GM23248 (cell line): ENCODE measurements at regions of chr6 and their contacts with region 1.

Region 1: DNA sequence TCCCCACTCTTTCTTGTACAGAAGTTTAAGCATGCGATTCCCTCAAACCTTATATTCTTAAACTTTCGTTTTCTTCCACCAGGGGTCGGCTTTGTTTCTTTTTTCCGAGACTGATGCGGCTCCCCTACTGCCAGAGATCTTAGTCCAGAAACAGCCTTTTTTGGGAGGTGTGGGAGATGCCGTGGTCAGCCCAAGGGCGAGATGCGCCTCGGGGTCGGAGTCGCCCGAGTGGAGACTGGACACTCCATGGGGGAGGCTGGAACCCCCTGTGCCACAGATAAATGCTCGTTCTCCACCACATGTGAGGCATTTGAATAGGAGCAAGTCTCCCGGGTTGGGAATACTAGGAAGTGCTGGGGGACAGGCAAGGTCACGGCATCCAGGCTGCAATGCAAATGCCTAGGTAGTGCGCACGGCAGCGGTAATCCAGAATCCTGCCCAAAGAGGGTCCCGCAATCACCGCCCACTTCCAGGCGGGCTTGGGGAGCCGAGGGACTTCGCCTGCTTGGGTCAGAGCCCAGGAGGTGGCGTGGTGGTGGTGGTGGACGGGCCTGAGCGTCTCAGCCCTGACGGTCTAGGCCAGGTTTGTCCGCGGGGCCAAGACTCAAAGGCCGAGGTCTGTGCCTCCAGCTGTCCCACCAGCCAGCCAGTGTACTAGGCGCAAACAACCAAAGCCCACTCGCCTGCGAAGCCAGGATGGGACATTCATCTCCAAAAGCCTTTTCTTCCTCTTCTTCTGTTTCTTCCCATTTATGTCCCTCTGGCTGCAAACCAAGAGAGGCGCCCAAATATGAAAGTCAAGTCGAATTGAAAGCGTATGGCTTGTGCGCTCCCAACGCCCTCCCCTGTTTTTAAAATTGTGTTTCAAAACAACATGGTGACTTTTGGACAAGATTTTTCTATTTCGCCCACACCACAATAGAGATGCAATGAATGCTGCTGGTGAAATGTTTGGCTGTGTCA is 39.3 kb upstream of the OSTM1 start:
- DNase-seq: peak; percentile 74
- H3K4me3 ChIP-seq: peak overlapping the region; percentile 71
- H3K27ac ChIP-seq: no peak overlapping the region
- H3K4me1 ChIP-seq: no peaks in the 10 kb centered on the region
- H3K27me3 ChIP-seq: peaks cover 48% of the 10 kb centered on the region

Region 2: DNA sequence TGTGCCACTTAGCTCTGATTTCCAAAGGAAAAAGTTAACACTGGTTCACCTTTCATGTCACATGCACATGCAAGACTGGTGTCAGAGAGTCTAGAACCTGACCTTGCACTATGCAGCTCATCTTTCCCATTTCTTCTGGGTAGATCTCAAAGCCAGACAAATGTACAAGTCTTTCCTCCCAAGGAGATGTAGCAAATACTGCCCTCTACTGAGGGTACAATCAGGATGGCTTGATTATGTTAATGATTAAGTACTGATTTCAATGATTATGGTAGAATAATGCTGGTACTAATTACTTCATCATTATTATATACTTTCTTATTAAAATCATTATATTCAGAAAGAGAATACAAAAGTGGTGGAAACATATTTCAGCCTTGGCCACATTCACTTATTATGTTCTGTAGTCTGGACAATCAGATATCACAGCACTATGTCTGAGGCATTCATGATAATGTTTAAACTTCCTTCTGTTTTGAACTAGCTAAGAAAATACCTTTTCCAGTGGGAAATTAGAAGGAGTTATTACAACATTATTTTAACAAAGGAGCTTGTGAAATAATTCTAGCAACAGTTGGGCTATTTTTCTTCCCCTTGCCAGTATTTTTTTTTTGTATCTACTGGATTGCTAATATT is 378.4 kb after region 1 on chr6:
- in situ Hi-C with region 1: loop called (anchors 10 kb)
- DNase-seq: peak; percentile 61
- H3K4me3 ChIP-seq: no peak overlapping the region
- H3K27ac ChIP-seq: no peak overlapping the region
- H3K4me1 ChIP-seq: no peaks in the 10 kb centered on the region
- H3K27me3 ChIP-seq: no peaks in the 10 kb centered on the region

Region 3: DNA sequence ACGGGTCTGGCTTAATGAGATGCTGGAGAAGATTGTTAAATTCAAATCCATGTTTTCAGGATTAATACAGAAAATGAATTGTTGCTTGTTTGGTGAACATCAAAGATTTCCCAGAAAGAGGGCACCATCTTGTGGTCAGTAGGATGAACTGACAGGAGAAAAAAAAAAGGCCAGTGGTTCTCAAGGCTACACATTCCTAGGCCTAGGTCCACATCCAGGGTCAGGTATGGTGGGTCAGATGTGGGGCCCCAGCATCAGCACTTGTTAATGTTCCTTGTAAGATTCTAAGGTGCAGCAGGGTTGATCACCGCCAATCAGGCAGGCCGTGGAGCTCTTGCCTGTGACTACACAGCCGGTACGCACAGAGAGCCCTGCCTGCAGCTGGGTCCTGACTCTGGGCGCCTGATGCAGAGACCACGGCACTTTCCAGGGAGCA is 412.9 kb after region 1 on chr6:
- in situ Hi-C with region 1: loop called (anchors 10 kb)
- DNase-seq: peak; percentile 64
- H3K4me3 ChIP-seq: no peak overlapping the region
- H3K27ac ChIP-seq: no peak overlapping the region
- H3K4me1 ChIP-seq: no peaks in the 10 kb centered on the region
- H3K27me3 ChIP-seq: no peaks in the 10 kb centered on the region

Region 4: DNA sequence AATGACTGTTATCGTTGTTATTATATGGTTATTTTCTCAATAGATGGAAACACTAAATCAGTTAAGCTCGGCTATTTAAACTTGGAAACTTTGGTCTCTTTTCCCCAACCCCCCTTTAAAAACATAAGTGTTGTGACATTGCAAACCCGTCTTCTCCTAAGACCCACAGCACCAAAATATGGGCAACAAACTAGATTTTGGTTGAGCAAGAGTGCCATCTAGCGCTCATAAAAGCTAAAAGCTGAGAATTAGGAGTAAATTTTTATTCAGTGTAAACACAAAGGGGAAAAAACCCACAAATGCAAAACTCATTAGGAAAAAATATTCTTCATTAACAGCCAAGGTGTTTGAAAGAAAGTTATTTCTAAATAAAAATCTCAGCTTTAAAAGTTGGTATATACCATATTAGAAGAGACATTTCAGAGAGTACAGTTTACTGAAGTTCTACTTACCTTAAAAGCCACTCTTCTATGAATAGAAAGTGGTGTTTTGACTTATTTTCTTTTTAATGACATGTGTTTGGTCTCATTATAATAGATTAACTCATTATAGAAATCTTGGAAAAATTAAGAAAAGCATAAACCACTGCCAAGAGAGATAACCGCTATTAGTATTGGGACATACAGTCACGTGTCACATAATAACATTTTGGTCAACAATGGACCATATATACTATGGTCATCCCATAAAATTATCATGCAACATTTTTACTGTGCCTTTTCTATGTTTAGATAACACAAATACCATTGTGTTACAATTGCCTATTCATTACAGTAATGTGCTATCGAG is 959.7 kb after region 1 on chr6:
- in situ Hi-C with region 1: loop called (anchors 25 kb)
- DNase-seq: peak; percentile 77
- H3K4me3 ChIP-seq: no peak overlapping the region
- H3K27ac ChIP-seq: no peak overlapping the region
- H3K4me1 ChIP-seq: peaks cover 15% of the 10 kb centered on the region
- H3K27me3 ChIP-seq: no peaks in the 10 kb centered on the region